Activated naive CD4-positive, alpha-beta T cell treated with anti-CD3 and anti-CD28 coated beads for 36 hours (primary cell): ENCODE measurements at regions of chr11 and their contacts with region 1.

Region 1: DNA sequence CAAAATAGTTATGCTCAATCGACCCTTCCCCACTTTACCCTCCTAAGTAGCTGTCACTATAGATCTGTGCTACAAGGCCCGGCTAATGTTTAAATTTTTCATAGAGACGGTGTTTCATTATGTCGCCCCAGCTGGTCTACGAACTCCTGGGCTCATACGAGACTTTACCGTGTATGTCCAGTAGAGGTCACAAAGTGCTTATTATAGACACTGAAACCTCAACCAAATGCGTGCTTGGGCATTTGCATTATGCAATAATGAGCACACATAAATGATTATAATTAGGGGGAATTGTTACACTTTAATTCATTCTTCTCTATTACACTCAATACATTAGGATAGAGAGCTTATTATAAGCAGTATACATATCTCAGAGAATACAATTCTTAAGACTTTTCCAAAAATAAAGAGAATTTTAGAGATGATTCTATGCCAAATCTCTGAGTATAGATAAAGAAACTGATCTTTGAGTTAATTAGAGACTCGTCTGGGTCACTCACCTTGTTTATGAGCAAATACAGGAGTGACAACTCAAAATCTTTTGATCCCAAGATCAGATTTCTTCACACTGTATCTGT is 12.5 kb upstream of the MRPL16 start:
- DNase-seq: peak; percentile 56
- H3K4me3 Mint-ChIP-seq: no peak overlapping the region
- H3K27ac Mint-ChIP-seq: no peak overlapping the region
- H3K4me1 Mint-ChIP-seq: peaks cover 3% of the 10 kb centered on the region
- H3K27me3 Mint-ChIP-seq: no peaks in the 10 kb centered on the region

Region 2: GRCh38 chr11:59335001-59335400 is 488.1 kb before region 1 on chr11:
- CTCF ChIA-PET with region 1: no interaction called
- intact Hi-C with region 1: no loop called
- DNase-seq: no peak
- H3K4me3 Mint-ChIP-seq: no peak overlapping the region
- H3K27ac Mint-ChIP-seq: no peak overlapping the region
- H3K4me1 Mint-ChIP-seq: no peaks in the 10 kb centered on the region
- H3K27me3 Mint-ChIP-seq: peaks cover 20% of the 10 kb centered on the region

Region 3: DNA sequence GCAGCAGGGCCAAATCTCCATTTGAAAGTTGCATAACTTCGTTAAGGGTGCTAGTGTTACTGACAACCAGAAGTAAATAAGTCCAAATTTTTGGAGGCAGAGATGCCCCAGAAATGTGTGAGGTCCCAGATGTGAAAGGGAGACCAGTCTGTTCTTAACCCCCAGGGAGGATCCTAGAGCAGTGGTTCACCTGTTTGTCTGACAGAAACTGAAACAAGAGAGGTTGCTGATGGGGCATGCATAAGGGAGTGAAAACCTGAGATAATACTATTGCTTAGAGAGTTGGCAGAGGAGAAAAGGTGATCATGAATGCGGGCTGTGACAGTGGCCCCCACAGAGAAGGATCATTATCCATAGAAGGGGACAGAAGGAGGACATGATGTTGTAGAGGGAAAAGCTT is 18.4 kb after region 1 on chr11:
- CTCF ChIA-PET with region 1: no interaction called
- intact Hi-C with region 1: no loop called
- DNase-seq: no peak
- H3K4me3 Mint-ChIP-seq: no peak overlapping the region
- H3K27ac Mint-ChIP-seq: no peak overlapping the region
- H3K4me1 Mint-ChIP-seq: no peaks in the 10 kb centered on the region
- H3K27me3 Mint-ChIP-seq: peaks cover 6% of the 10 kb centered on the region

Region 4: GRCh38 chr11:59857444-59858434 is 34.7 kb after region 1 on chr11:
- CTCF ChIA-PET with region 1: no interaction called
- intact Hi-C with region 1: loop called (anchors 2 kb)
- DNase-seq: peak; percentile 25
- H3K4me3 Mint-ChIP-seq: no peak overlapping the region
- H3K27ac Mint-ChIP-seq: peak overlapping the region; percentile 54
- H3K4me1 Mint-ChIP-seq: peaks cover 12% of the 10 kb centered on the region
- H3K27me3 Mint-ChIP-seq: peaks cover 13% of the 10 kb centered on the region

Region 5: GRCh38 chr11:59918987-59919589 is 96.0 kb after region 1 on chr11:
- CTCF ChIA-PET with region 1: no interaction called
- intact Hi-C with region 1: loop called (anchors 1 kb)
- DNase-seq: peak; percentile 46
- H3K4me3 Mint-ChIP-seq: no peak overlapping the region
- H3K27ac Mint-ChIP-seq: no peak overlapping the region
- H3K4me1 Mint-ChIP-seq: no peaks in the 10 kb centered on the region
- H3K27me3 Mint-ChIP-seq: peaks cover 4% of the 10 kb centered on the region

Region 6: GRCh38 chr11:60130496-60130895 is 307.4 kb after region 1 on chr11:
- CTCF ChIA-PET with region 1: no interaction called
- intact Hi-C with region 1: loop called (anchors 1 kb)
- DNase-seq: peak; percentile 39
- H3K4me3 Mint-ChIP-seq: no peak overlapping the region
- H3K27ac Mint-ChIP-seq: no peak overlapping the region
- H3K4me1 Mint-ChIP-seq: no peaks in the 10 kb centered on the region
- H3K27me3 Mint-ChIP-seq: peaks cover 9% of the 10 kb centered on the region

Region 7: GRCh38 chr11:60193687-60194433 is 370.8 kb after region 1 on chr11:
- CTCF ChIA-PET with region 1: no interaction called
- intact Hi-C with region 1: loop called (anchors 1 kb)
- DNase-seq: peak; percentile 79
- H3K4me3 Mint-ChIP-seq: no peak overlapping the region
- H3K27ac Mint-ChIP-seq: no peak overlapping the region
- H3K4me1 Mint-ChIP-seq: peaks cover 6% of the 10 kb centered on the region
- H3K27me3 Mint-ChIP-seq: peaks cover 17% of the 10 kb centered on the region

Region 8: GRCh38 chr11:60265373-60266214 is 442.5 kb after region 1 on chr11:
- CTCF ChIA-PET with region 1: no interaction called
- intact Hi-C with region 1: loop called (anchors 2 kb)
- DNase-seq: peak; percentile 27
- H3K4me3 Mint-ChIP-seq: no peak overlapping the region
- H3K27ac Mint-ChIP-seq: no peak overlapping the region
- H3K4me1 Mint-ChIP-seq: no peaks in the 10 kb centered on the region
- H3K27me3 Mint-ChIP-seq: peaks cover 8% of the 10 kb centered on the region

Region 9: DNA sequence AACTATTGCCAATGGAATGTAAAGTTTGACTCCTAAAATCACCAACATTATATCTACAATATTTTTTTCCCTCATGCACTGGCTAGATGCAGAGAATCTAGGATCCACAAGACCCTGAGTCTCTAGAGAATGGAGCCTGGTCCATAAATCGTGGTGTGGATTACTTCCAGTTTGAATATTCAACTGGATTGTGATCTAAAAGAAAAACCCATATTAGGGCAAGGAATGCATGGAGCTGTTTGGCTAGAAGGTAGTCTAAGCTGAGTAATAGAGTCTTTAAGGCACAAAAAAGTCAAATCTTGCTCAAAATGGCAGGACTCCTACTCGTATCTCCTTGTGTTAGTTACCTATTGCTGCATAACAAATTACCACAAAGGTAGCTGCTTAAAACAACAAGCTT is 596.9 kb after region 1 on chr11:
- CTCF ChIA-PET with region 1: no interaction called
- intact Hi-C with region 1: no loop called
- DNase-seq: no peak
- H3K4me3 Mint-ChIP-seq: no peak overlapping the region
- H3K27ac Mint-ChIP-seq: no peak overlapping the region
- H3K4me1 Mint-ChIP-seq: no peaks in the 10 kb centered on the region
- H3K27me3 Mint-ChIP-seq: peaks cover 12% of the 10 kb centered on the region